CD8-positive, alpha-beta T cell (primary cell): ENCODE measurements at regions of chr1 and their contacts with region 1.

Region 1: DNA sequence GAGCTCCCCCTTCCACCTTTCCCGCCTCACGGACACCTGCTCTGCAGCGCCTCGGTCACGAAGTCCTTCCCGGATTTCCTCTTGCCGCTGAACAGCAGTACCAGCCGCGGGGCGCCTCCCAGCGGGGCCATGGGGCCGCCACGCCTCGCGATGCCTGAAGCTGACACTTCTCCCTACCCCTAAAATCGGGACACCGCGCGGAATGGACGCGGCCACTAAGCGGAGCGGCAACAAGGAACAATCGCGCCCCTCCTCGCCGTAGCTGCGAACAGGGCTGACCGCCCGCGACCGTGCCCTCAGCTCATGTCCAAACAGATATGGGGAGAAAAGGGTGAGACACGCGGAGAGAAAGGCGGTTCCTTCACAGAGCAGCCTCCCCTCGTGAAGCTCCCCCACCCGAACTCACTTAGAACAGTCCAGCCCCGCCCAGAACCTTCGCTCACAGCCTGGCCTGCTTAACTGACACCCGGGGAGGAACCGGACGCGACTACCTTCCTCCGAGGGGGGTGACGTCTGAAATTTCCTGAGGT is at the start of gene PMVK:
- DNase-seq: peak; percentile 89 to 98 (median 96)
- ATAC-seq: peak; percentile 85
- H3K4me3 ChIP-seq: peak within 1 kb of the TSS; percentile 87 to 90
- H3K4me3 Mint-ChIP-seq: peak within 1 kb of the TSS; percentile 97
- H3K27ac ChIP-seq: peak within 1 kb of the TSS; percentile 94 to 97
- H3K27ac Mint-ChIP-seq: peak within 1 kb of the TSS; percentile 99
- H3K4me1 ChIP-seq: peaks cover 32% of the 10 kb centered on the region
- H3K4me1 Mint-ChIP-seq: peaks cover 49% of the 10 kb centered on the region
- H3K27me3 ChIP-seq: no peaks in the 10 kb centered on the region
- H3K27me3 Mint-ChIP-seq: no peaks in the 10 kb centered on the region
- CTCF ChIP-seq: no peak
- total RNA-seq, gene PMVK: 6.7 to 7.3 TPM

Region 2: GRCh38 chr1:154791292-154792166 is 145.1 kb before region 1 on chr1:
- CTCF ChIA-PET with region 1: no interaction called
- POLR2A ChIA-PET with region 1: interaction called, 3 read pairs
- intact Hi-C with region 1: loop called (anchors 2 to 5 kb)
- DNase-seq: peak; percentile 69 to 97 (median 85)
- ATAC-seq: peak; percentile 93
- H3K4me3 ChIP-seq: peak overlapping the region in 1 of 2 experiments; percentile 5
- H3K4me3 Mint-ChIP-seq: peak overlapping the region; percentile 73
- H3K27ac ChIP-seq: peak overlapping the region; percentile 10 to 25
- H3K27ac Mint-ChIP-seq: peak overlapping the region; percentile 90
- H3K4me1 ChIP-seq: peaks cover 27% of the 10 kb centered on the region
- H3K4me1 Mint-ChIP-seq: peaks cover 39% of the 10 kb centered on the region
- H3K27me3 ChIP-seq: no peaks in the 10 kb centered on the region
- H3K27me3 Mint-ChIP-seq: no peaks in the 10 kb centered on the region
- CTCF ChIP-seq: peak; percentile 27

Region 3: DNA sequence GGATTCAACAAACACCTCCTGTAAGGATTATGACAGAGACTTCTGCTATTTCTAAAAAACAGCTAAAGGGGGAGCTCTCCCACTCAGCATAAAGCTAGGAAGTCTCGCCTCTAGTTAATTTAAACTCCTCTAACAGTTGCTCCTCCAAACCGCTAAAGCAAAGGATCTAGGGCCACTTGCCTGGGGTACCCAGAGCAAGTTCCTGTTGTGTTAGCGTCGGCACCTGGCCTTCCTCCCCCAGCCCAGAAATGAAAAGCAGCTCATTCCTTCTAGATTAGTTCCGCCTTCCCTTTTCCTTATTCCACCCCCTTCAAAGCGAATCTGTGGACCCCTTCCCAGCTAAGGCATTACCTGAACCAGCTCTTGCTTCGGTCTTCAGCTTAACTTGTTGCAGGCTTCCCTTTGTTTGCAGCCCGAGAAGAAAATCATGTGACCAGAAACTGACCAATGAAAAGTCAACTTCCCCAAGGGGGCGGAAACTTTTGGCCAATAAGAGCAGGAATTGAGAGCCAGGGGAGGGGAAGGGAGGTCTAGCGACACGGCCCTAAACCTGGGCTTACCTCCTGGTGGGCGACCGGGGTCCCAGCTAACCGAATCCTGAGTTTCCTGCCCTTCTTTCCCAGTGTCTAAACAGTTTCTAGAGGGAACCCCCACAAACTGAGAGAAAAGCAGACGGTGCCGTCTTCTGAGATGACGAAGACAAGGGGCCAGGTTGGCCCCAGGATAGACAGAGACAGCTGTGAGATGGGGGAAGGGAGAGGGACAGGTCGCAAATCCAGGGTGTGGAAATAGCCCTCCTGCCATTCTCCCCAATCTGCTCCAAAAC is 19.3 kb after region 1 on chr1 and contains the start of gene PBXIP1:
- CTCF ChIA-PET with region 1: interaction called, 26 read pairs
- POLR2A ChIA-PET with region 1: interaction called, 52 read pairs
- intact Hi-C with region 1: loop called (anchors 1 kb)
- DNase-seq: peak; percentile 65 to 96 (median 84)
- ATAC-seq: peak; percentile 40
- H3K4me3 ChIP-seq: peak within 1 kb of the TSS; percentile 71 to 76
- H3K4me3 Mint-ChIP-seq: peak within 1 kb of the TSS; percentile 99
- H3K27ac ChIP-seq: peak within 1 kb of the TSS; percentile 98
- H3K27ac Mint-ChIP-seq: peak within 1 kb of the TSS; percentile 99
- H3K4me1 ChIP-seq: peaks cover 60% of the 10 kb centered on the region
- H3K4me1 Mint-ChIP-seq: peaks cover 76% of the 10 kb centered on the region
- H3K27me3 ChIP-seq: no peaks in the 10 kb centered on the region
- H3K27me3 Mint-ChIP-seq: no peaks in the 10 kb centered on the region
- CTCF ChIP-seq: no peak
- total RNA-seq, gene PBXIP1: 315 to 319 TPM

Region 4: DNA sequence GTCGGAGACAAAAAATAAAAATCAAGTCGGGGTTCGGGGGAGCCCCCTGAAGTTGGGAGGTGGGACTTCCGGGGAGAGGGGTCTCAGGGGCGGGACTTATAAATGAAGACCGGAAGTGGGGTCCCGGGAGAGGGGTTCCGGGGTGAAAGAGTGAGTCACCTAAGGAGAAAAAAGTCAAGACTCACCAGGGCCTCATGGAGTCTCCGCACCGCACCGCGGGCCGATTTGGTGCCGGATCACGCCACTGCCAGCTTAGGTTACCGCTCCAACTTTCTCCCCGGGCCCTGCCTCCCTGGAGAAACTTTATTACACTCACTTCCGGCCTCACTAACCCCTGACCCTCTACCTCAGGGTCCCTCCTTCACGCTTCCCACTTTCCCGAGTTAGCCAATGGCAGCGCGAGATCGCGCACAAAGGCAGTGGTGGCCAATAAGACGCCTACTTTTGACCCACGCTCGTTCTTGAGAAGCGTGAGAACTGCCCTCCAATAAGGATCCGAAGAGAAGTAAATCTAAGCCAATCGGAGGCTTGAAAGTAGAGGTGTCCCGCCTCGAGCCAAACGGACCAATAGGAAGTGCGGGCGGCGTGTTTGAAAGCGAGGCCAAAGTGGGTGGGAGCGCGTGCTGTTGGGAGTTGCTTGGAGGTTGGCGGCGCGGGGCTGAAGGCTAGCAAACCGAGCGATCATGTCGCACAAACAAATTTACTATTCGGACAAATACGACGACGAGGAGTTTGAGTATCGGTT is 37.6 kb after region 1 on chr1 and contains the start of gene CKS1B:
- CTCF ChIA-PET with region 1: interaction called, 3 read pairs
- POLR2A ChIA-PET with region 1: interaction called, 3 read pairs
- intact Hi-C with region 1: loop called (anchors 1 kb)
- DNase-seq: peak; percentile 92 to 99 (median 97)
- ATAC-seq: peak; percentile 86
- H3K4me3 ChIP-seq: peak within 1 kb of the TSS; percentile 67
- H3K4me3 Mint-ChIP-seq: no peak within 1 kb of the TSS
- H3K27ac ChIP-seq: peak within 1 kb of the TSS; percentile 90 to 95
- H3K27ac Mint-ChIP-seq: no peak within 1 kb of the TSS
- H3K4me1 ChIP-seq: peaks cover 23% of the 10 kb centered on the region
- H3K4me1 Mint-ChIP-seq: peaks cover 26% of the 10 kb centered on the region
- H3K27me3 ChIP-seq: no peaks in the 10 kb centered on the region
- H3K27me3 Mint-ChIP-seq: no peaks in the 10 kb centered on the region
- CTCF ChIP-seq: no peak
- total RNA-seq, gene CKS1B: 2.3 to 2.9 TPM

Region 5: DNA sequence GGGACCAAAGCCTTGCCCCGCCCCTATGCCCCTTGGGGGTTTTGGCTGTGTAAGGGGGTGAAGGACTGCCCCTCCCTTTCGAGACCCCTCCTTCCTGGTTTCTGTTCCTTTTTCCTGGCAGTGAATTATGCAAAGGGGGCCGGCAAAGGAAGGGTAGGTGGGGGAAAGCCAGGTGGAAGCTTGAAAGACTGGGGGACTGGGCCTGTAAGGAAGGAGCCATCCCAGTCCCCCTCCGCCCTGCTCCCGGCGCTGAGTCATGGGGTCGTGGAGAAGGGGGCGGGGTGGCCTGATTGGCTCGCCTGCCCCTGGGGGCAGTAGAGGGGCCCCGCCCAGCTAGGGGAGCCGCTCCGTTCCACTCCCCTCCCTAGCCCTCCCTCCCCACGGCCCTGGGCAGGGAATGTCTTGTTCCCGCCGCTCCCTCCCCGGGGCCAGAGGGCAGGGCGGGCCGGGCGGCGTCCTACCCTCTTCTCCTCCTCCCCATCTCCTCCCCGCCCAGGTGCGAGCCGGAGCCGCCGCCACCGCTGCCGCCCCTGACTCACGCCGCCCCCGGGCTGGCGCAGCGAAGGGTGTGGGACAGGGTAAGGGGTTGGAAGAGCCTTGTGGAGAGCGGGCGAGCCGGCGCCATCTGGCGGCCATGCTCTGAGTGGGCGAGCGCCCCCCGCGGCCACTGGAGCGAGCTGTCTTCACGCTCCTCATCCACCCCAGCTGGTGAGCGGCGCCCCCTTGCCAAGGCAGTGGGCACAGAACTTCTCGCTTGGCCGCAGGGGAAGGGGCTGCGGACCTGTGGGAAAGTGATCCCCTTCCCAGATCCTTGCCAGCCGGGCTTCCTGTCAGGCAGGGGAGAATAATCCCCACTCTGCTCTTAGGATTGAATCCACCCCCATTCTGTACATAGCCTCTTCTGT is 80.7 kb after region 1 on chr1:
- CTCF ChIA-PET with region 1: interaction called, 14 read pairs
- POLR2A ChIA-PET with region 1: interaction called, 8 read pairs
- intact Hi-C with region 1: loop called in 1 of 2 experiments (anchors 2 kb)
- DNase-seq: peak; percentile 71 to 92 (median 88)
- ATAC-seq: peak; percentile 98
- H3K4me3 ChIP-seq: peak overlapping the region; percentile 31 to 46
- H3K4me3 Mint-ChIP-seq: peak overlapping the region; percentile 59
- H3K27ac ChIP-seq: no peak overlapping the region
- H3K27ac Mint-ChIP-seq: no peak overlapping the region
- H3K4me1 ChIP-seq: peaks cover 55% of the 10 kb centered on the region
- H3K4me1 Mint-ChIP-seq: peaks cover 44% of the 10 kb centered on the region
- H3K27me3 ChIP-seq: no peaks in the 10 kb centered on the region
- H3K27me3 Mint-ChIP-seq: no peaks in the 10 kb centered on the region
- CTCF ChIP-seq: peak; percentile 99

Region 6: GRCh38 chr1:155562581-155563376 is 626.2 kb after region 1 on chr1 and contains the start of gene ASH1L:
- CTCF ChIA-PET with region 1: no interaction called
- POLR2A ChIA-PET with region 1: no interaction called
- intact Hi-C with region 1: loop called in 1 of 2 experiments (anchors 5 kb)
- DNase-seq: peak; percentile 89 to 98 (median 94)
- ATAC-seq: peak; percentile 73
- H3K4me3 ChIP-seq: peak within 1 kb of the TSS; percentile 91 to 100
- H3K4me3 Mint-ChIP-seq: peak within 1 kb of the TSS; percentile 99
- H3K27ac ChIP-seq: peak within 1 kb of the TSS; percentile 97 to 98
- H3K27ac Mint-ChIP-seq: peak within 1 kb of the TSS; percentile 98
- H3K4me1 ChIP-seq: peaks cover 38% of the 10 kb centered on the region
- H3K4me1 Mint-ChIP-seq: peaks cover 53% of the 10 kb centered on the region
- H3K27me3 ChIP-seq: no peaks in the 10 kb centered on the region
- H3K27me3 Mint-ChIP-seq: no peaks in the 10 kb centered on the region
- CTCF ChIP-seq: no peak
- total RNA-seq, gene ASH1L: 54.6 to 58.9 TPM